Activated CD4-positive, alpha-beta T cell treated with anti-CD3 and anti-CD28 coated beads, Interleukin-2, amount 10 ng/mL, durations not matched to agents 7 days and 5 days (primary cell): ENCODE measurements at regions of chr4 and their contacts with region 1.

Region 1: DNA sequence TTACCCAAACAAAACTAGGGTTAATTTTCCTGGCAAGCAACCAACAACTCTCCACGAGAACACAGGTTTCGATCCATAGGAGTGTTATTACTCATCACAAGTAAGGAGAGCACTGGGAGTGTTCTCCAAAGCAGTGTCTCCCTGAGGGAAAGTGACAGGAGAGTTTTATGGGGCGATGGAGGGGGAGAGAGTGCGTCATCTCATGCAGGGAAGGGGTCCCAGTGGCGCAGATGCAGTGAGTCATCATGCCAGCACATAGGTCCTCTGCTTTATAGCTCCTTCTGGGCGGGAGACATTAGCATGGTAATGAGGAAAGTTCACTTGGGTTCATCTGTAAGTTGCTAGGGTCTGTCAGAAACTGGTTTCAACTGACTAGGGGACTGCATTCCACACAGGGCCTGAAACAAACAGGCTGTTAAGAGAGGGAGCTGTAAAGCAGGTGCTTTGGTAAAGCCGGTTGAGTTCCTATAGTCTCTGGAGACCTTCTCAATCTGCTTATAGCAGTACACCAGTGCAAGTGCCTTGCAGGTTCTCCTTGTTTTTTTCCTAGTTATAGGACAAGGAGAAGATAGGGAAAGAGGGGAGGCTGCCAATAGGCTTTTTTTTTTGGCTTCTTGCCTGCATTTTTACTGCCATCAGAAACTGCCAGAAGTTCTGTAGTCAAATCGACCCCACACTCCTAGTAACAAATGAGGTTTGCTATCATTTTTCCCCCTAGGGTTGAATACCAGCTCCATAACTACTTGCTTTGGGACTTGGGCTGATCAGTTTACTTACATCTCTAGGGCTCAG is 12.8 kb upstream of the BOD1L1 start:
- DNase-seq: no peak
- H3K4me3 Mint-ChIP-seq: no peak overlapping the region
- H3K27ac Mint-ChIP-seq: no peak overlapping the region
- H3K4me1 Mint-ChIP-seq: no peaks in the 10 kb centered on the region
- H3K27me3 Mint-ChIP-seq: peaks cover 34% of the 10 kb centered on the region

Region 2: DNA sequence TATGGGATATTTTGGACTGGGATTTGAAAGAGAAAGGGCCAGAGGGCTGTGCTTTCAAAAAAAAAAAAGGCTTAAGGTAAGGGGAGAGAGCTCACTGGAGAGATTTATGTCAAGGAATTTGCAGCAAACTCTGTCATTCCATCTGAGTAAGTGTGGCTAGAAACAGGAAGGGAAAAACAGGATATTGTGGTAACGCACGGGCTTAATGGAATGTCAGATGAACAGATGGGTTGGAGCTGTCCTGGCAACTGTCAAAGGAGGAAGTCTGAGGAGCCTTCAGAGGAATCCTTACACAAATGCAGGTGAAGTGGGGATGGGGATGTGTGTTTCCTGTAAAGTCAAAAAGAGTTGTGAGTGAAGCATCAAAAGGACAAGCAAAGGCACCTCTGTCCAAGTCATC is 80.9 kb before region 1 on chr4:
- CTCF ChIA-PET with region 1: no interaction called
- POLR2A ChIA-PET with region 1: no interaction called
- DNase-seq: no peak
- H3K4me3 Mint-ChIP-seq: no peak overlapping the region
- H3K27ac Mint-ChIP-seq: no peak overlapping the region
- H3K4me1 Mint-ChIP-seq: no peaks in the 10 kb centered on the region
- H3K27me3 Mint-ChIP-seq: peaks cover 15% of the 10 kb centered on the region

Region 3: GRCh38 chr4:13627606-13628301 is 12.6 kb before region 1 on chr4 and contains the start of gene BOD1L1:
- CTCF ChIA-PET with region 1: interaction called, 14 read pairs
- POLR2A ChIA-PET with region 1: no interaction called
- DNase-seq: peak; percentile 80
- H3K4me3 Mint-ChIP-seq: peak within 1 kb of the TSS; percentile 87
- H3K27ac Mint-ChIP-seq: peak within 1 kb of the TSS; percentile 97
- H3K4me1 Mint-ChIP-seq: peaks cover 34% of the 10 kb centered on the region
- H3K27me3 Mint-ChIP-seq: no peaks in the 10 kb centered on the region
- total RNA-seq, gene BOD1L1: 37.7 to 43.1 TPM

Region 4: DNA sequence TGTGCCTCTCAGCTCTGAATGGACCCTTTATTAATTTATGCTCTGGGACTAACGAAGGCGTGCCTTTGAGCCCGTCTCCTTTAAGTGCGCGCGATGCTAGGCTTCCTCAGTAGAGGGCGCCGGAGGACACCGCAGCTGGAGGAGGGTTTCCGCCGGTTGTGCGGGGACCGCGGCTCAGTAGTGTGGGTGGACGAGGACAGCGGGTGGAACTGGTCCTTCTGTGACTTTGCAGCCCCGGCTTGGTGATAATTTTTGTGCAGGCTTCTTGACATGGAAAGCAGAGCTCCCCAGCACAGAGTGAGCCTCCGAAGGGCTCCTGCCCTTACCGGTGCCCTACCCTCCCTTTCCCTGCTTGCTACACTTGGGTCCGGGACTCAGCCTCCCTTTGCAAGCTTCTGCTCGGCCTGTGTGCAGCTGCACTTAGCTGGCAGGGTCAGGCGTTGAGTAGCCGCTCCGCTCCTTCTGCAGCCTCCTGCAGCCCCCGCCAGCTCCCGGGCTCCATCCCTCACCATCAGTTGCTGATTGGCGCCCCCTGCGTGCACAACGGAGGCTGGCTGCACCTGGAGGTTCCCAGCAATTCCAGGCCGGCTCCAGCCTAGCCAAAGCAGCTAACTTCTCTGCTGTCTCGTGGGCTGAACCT is 13.9 kb after region 1 on chr4:
- CTCF ChIA-PET with region 1: interaction called, 10 read pairs
- POLR2A ChIA-PET with region 1: no interaction called
- DNase-seq: peak; percentile 83
- H3K4me3 Mint-ChIP-seq: peak overlapping the region; percentile 77
- H3K27ac Mint-ChIP-seq: no peak overlapping the region
- H3K4me1 Mint-ChIP-seq: peaks cover 16% of the 10 kb centered on the region
- H3K27me3 Mint-ChIP-seq: peaks cover 4% of the 10 kb centered on the region